ENCODE measurements at regions of chr6 and their contacts with region 1.

Region 1: DNA sequence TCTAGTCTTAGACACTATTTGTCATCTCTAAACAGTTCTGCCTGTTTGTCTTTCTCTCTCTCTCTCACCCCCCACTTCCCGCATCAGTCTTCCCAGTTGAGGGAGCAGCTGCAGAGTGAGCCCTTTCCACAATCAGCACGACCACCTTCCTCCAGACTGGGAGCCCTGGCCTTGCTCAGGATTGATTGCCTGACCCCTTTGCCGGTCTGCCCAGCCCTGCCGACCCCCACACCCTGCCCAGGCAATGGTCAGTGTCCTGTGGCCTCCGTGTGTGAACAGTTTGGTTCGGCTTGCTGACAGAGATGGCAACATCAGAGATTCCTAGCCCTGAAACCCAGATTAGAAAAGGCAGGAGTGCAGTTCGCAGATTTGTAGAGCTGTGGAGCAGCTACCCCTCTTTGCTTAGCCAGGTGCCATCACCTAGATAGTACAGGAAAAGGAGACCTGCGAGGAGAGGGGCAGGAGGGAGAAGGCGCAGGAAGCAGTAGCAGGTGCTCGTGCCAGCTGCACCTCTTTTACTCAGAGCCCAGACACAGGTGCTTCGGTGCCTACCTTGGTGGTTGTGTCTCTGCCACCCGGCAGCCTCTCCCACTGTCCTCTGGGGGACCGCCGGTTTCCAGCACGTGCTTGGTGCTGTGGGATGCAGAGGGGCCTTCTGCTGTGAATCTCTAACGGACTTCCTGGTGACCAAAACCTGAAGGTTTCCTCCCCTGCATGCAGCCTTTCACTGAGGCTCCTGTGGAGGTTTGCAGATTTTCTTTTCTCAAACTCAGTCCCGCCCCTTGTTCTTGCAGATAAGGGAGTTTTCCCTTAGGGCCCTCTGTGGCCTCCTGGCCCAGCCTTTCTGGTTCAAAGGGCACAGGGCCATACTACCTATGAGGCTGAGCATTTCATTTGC is 92.4 kb downstream of the SCML4 start:
- DNase-seq: peak in 6 of 9 experiments; percentile 37 to 74 (median 45)
- ATAC-seq: peak; percentile 31
- H3K4me3 ChIP-seq: peak overlapping the region; percentile 73 to 85
- H3K4me3 Mint-ChIP-seq: peak overlapping the region; percentile 88
- H3K27ac ChIP-seq: peak overlapping the region; percentile 43 to 83
- H3K27ac Mint-ChIP-seq: peak overlapping the region; percentile 94
- H3K4me1 ChIP-seq: peaks cover 82% of the 10 kb centered on the region
- H3K4me1 Mint-ChIP-seq: peaks cover 95% of the 10 kb centered on the region
- H3K27me3 ChIP-seq: no peaks in the 10 kb centered on the region
- H3K27me3 Mint-ChIP-seq: no peaks in the 10 kb centered on the region
- CTCF ChIP-seq: no peak

Region 2: GRCh38 chr6:107786709-107787588 is 55.3 kb after region 1 on chr6:
- CTCF ChIA-PET with region 1: interaction called, 14 read pairs
- POLR2A ChIA-PET with region 1: interaction called, 24 read pairs
- intact Hi-C with region 1: loop called in 1 of 2 experiments (anchors 2 kb)
- DNase-seq: peak in 8 of 9 experiments; percentile 32 to 75 (median 56)
- ATAC-seq: peak; percentile 75
- H3K4me3 ChIP-seq: peak overlapping the region; percentile 7 to 19
- H3K4me3 Mint-ChIP-seq: peak overlapping the region; percentile 72
- H3K27ac ChIP-seq: peak overlapping the region; percentile 29 to 78
- H3K27ac Mint-ChIP-seq: peak overlapping the region; percentile 85
- H3K4me1 ChIP-seq: peaks cover 78% of the 10 kb centered on the region
- H3K4me1 Mint-ChIP-seq: peaks cover 87% of the 10 kb centered on the region
- H3K27me3 ChIP-seq: no peaks in the 10 kb centered on the region
- H3K27me3 Mint-ChIP-seq: no peaks in the 10 kb centered on the region
- CTCF ChIP-seq: no peak

Region 3: DNA sequence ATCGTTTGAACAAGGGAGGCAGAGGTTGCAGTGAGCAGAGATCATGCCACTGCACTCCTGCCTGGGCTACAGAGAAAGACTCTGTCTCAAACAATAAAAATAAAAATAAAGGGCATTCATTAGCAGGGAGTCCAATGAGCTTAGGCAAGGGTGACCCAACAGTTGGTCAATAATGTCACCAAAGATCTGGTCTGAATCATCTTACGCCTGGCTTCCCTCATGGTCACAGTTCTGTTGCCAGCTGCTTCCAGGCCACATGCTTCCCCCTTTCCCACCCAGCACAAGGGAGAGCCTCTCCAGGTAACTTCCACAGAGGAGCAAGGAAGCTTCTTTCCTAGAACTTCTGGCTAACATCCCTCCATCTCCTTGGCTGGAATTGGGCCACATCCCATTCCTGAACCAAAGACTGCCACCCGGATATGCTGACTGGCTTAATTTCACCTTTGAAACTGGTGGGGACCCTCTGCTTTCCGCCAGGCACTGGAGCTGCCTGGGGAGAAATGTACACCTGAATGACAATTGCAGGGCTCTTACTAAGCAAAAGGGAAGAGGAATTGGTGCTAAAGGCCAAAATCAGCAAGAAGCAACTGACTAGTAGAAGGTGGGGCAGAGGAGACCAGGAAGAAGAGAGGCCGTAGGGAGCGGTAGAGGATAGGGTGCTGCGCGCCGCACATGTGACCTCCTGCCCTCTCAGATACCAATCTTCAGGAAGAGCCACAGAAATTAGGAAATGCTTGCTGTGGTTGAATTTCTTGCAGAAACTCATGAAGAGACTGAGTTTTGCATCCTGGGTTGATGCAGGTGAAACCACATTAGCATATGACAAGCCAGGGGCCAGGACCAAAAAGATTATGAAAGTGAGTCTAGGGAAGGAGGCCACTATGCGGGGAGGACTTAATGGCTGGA is 100.7 kb after region 1 on chr6:
- CTCF ChIA-PET with region 1: interaction called, 18 read pairs
- POLR2A ChIA-PET with region 1: no interaction called
- intact Hi-C with region 1: no loop called
- DNase-seq: no peak
- ATAC-seq: no peak
- H3K4me3 ChIP-seq: no peak overlapping the region
- H3K4me3 Mint-ChIP-seq: no peak overlapping the region
- H3K27ac ChIP-seq: no peak overlapping the region
- H3K27ac Mint-ChIP-seq: no peak overlapping the region
- H3K4me1 ChIP-seq: peaks cover 15% of the 10 kb centered on the region
- H3K4me1 Mint-ChIP-seq: peaks cover 22% of the 10 kb centered on the region
- H3K27me3 ChIP-seq: no peaks in the 10 kb centered on the region
- H3K27me3 Mint-ChIP-seq: no peaks in the 10 kb centered on the region
- CTCF ChIP-seq: no peak